BJ (cell line): ENCODE measurements at regions of chr4 and their contacts with region 1.

Region 1: GRCh38 chr4:40897557-40898203 is 147.9 kb downstream of the NSUN7 start:
- DNase-seq: no peak
- H3K4me3 ChIP-seq: no peak overlapping the region
- H3K27me3 ChIP-seq: no peaks in the 10 kb centered on the region
- CTCF ChIP-seq: peak; percentile 74

Region 2: GRCh38 chr4:40439519-40439918 is 458.2 kb before region 1 on chr4:
- CTCF ChIA-PET with region 1: no interaction called
- POLR2A ChIA-PET with region 1: interaction called, 19 read pairs
- DNase-seq: no peak
- H3K4me3 ChIP-seq: no peak overlapping the region
- H3K27me3 ChIP-seq: no peaks in the 10 kb centered on the region
- CTCF ChIP-seq: no peak

Region 3: GRCh38 chr4:40736910-40737309 is 160.8 kb before region 1 on chr4:
- CTCF ChIA-PET with region 1: interaction called, 23 read pairs
- POLR2A ChIA-PET with region 1: no interaction called
- DNase-seq: no peak
- H3K4me3 ChIP-seq: no peak overlapping the region
- H3K27me3 ChIP-seq: peaks cover 3% of the 10 kb centered on the region; the same call in 1 of the 2 replicates
- CTCF ChIP-seq: peak; percentile 22; the same call in 1 of the 2 replicates

Region 4: GRCh38 chr4:40887288-40888131 is 10.2 kb before region 1 on chr4:
- CTCF ChIA-PET with region 1: interaction called, 34 read pairs
- POLR2A ChIA-PET with region 1: no interaction called
- DNase-seq: peak; percentile 37
- H3K4me3 ChIP-seq: no peak overlapping the region
- H3K27me3 ChIP-seq: no peaks in the 10 kb centered on the region
- CTCF ChIP-seq: no peak

Region 5: DNA sequence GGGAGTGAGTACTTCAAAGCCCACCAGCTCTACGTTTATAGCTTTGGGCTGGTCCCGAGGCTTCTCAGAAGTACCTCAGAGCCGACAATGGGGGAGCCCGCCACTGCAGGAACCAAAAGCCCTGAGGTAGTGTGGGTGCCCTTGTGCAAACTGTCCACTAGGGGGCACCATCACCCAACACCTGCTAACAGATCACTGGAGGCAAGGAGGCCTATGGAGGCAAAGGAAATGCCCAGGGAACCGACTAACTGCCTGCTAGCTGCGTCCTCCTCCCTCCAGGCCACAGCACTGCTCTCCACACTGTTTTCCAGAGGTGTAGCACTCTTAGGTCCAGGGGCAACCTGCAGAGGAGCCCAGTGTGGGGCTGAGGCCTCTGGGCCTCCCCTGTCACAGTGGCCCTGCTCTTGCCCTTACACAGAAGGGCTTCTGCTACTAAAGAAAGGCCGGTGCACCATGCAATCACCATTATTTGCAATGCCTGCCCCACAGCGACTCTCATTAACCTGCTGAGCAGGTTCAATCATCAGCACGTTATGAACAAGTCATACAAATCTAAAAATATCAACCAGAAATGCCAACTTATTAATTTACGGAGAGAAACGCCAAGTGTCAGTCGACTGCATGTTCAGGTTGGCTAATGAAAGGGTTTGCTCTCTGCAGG is 11.2 kb after region 1 on chr4:
- CTCF ChIA-PET with region 1: interaction called, 14 read pairs
- POLR2A ChIA-PET with region 1: no interaction called
- DNase-seq: no peak
- H3K4me3 ChIP-seq: no peak overlapping the region
- H3K27me3 ChIP-seq: no peaks in the 10 kb centered on the region
- CTCF ChIP-seq: peak; percentile 91

Region 6: GRCh38 chr4:40953283-40954087 is 55.8 kb after region 1 on chr4:
- CTCF ChIA-PET with region 1: no interaction called
- POLR2A ChIA-PET with region 1: no interaction called
- DNase-seq: no peak
- H3K4me3 ChIP-seq: no peak overlapping the region
- H3K27me3 ChIP-seq: no peaks in the 10 kb centered on the region
- CTCF ChIP-seq: no peak

Region 7: GRCh38 chr4:41044165-41044564 is 146.5 kb after region 1 on chr4:
- CTCF ChIA-PET with region 1: no interaction called
- POLR2A ChIA-PET with region 1: no interaction called
- DNase-seq: no peak
- H3K4me3 ChIP-seq: no peak overlapping the region
- H3K27me3 ChIP-seq: no peaks in the 10 kb centered on the region
- CTCF ChIP-seq: no peak